ENCODE measurements at regions of chr16 and their contacts with region 1.

Region 1: DNA sequence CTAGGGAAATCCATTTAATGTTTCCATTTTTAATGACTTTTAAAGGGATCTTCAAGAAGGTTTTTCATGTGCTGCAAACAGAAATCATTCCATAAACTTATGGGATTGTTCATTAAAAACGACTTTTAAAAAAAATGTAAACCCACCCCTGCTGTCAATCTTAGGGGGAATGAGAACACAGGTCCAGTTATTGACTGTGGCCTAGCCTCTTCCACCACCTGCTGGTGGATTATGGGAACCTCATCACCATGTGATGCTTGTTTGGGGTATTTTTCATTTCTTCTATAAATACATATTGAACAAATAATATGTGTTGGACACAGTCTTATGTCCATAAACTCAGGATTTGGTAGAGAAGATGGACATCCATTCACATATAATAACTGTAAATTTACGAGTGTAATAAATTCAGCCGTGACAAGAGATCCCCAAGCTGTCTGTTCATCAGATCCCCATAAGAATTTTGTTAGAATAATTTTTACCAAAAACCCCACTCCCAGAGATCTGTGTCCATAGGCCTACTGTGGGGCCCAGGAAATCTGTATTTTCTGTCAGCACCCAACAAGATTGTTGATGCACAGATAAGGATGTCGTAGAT is 42.0 kb upstream of the TMC5 start:
- DNase-seq: peak; percentile 62
- H3K4me3 ChIP-seq: no peak overlapping the region
- H3K27ac ChIP-seq: no peak overlapping the region
- H3K4me1 ChIP-seq: no peaks in the 10 kb centered on the region
- H3K27me3 ChIP-seq: no peaks in the 10 kb centered on the region
- CTCF ChIP-seq: peak; percentile 89

Region 2: DNA sequence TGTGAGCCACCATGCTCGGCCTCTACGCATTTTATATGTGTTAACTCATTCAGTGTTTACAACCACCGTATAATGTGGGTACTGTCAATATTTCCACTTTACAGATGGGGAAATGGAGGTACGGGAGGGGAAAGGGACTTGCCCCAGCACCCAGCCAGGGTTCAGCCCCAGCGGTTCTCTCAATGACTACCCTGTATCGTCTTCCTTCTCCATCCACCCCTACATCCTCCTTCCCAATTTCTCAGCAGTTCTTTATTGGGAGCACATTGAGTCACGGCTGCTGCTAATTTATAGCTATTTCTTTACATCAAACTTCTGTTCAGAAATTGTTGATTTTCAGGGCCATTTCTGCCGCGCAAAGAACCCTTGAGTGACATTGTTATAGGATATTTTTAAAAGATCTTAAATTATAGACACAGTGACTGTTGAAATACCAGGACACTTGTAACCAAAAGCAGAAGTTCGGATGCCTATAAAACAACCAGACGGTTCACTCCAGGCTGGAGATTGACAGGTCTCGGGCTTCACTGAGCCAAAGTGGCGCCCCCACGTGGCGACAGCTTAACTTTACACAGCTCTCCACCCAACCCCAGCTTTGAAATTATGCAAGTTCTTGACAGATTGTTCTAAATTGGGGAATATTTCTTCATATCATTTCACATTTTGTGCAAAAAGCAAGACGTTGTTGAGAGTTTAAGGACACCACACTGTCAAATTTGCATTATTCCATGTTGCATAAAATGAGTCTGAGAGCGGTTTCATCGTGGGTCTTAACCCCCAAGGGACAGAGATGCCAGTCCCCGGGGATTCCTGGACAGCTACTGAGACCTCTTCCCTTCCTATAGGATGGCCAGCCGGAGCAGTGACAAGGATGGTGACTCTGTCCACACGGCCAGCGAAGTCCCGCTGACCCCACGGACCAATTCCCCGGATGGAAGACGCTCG is 195.8 kb before region 1 on chr16:
- CTCF ChIA-PET with region 1: no interaction called
- POLR2A ChIA-PET with region 1: no interaction called
- intact Hi-C with region 1: loop called (anchors 5 kb)
- DNase-seq: peak; percentile 84
- H3K4me3 ChIP-seq: no peak overlapping the region
- H3K27ac ChIP-seq: no peak overlapping the region
- H3K4me1 ChIP-seq: peaks cover 9% of the 10 kb centered on the region
- H3K27me3 ChIP-seq: no peaks in the 10 kb centered on the region
- CTCF ChIP-seq: peak; percentile 91

Region 3: GRCh38 chr16:19203374-19204031 is 172.2 kb before region 1 on chr16:
- CTCF ChIA-PET with region 1: no interaction called
- POLR2A ChIA-PET with region 1: no interaction called
- intact Hi-C with region 1: no loop called
- DNase-seq: no peak
- H3K4me3 ChIP-seq: no peak overlapping the region
- H3K27ac ChIP-seq: no peak overlapping the region
- H3K4me1 ChIP-seq: no peaks in the 10 kb centered on the region
- H3K27me3 ChIP-seq: no peaks in the 10 kb centered on the region
- CTCF ChIP-seq: no peak

Region 4: DNA sequence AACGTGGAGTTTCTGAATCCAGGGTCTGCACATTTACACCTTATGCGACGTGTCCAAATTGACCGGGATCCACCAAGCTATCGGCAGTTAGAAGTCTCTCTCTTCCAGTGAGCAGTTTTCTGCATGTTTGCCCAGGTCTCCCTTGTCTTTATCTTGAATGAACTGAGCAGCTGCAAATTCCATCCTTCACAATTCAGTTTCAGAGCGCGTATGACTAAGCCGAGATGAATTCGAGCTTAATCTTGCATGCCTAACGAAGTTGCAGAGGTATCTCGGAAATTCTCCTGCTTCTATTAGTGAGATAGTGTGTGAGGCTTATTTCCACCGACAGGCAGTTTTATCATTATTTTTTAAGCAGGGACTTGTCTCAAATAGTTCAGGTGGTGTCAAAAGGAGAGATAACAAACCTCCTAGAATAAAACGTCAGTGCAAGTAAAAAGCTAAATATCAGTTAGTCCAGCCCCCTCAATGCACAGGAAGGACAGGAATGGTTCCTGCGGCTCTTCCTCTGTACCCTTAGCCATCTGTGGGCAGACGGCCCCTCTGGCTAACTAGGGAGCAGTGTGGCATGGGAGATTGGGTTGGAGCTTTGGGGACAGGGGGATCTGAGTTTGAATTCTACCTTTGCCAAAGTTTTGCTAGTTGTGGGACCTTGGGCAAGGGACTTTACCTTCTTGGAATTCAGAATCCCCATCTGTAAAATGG is 791.0 kb after region 1 on chr16:
- CTCF ChIA-PET with region 1: no interaction called
- POLR2A ChIA-PET with region 1: no interaction called
- intact Hi-C with region 1: no loop called
- DNase-seq: no peak
- H3K4me3 ChIP-seq: no peak overlapping the region
- H3K27ac ChIP-seq: no peak overlapping the region
- H3K4me1 ChIP-seq: no peaks in the 10 kb centered on the region
- H3K27me3 ChIP-seq: peaks cover 21% of the 10 kb centered on the region
- CTCF ChIP-seq: no peak

Measured in A673 (cell line).